ENCODE measurements at regions of chr3 and their contacts with region 1.

Region 1: DNA sequence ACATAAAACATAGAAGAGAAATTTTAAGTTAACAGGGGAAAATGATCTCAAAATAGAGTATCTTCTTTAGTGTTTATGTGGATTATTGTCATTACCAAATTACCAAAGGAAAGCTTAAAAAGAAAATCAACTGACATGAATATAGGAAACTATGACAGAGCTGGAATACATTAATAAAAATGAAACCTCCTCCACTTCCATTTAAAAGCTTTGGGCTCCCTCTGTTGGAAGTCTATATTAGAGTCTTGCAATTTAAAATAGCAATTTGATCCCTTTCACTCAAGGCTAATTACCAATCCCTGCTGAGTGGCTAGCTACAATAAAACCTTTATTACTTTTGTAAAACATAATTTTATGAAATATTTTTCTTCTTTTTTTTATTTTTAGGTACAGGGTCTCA is 61.4 kb upstream of the IMPG2 start:
- DNase-seq: peak; percentile 76
- ATAC-seq: peak; percentile 79
- H3K4me3 ChIP-seq: no peak overlapping the region
- H3K27ac ChIP-seq: no peak overlapping the region
- H3K4me1 ChIP-seq: no peaks in the 10 kb centered on the region
- H3K27me3 ChIP-seq: no peaks in the 10 kb centered on the region
- CTCF ChIP-seq: peak; percentile 82

Region 2: GRCh38 chr3:100603469-100603868 is 778.3 kb before region 1 on chr3:
- CTCF ChIA-PET with region 1: no interaction called
- POLR2A ChIA-PET with region 1: no interaction called
- intact Hi-C with region 1: loop called (anchors 5 kb)
- DNase-seq: peak; percentile 80
- ATAC-seq: peak; percentile 88
- H3K4me3 ChIP-seq: no peak overlapping the region
- H3K27ac ChIP-seq: no peak overlapping the region
- H3K4me1 ChIP-seq: peaks cover 17% of the 10 kb centered on the region
- H3K27me3 ChIP-seq: no peaks in the 10 kb centered on the region
- CTCF ChIP-seq: peak; percentile 81

Region 3: GRCh38 chr3:100737334-100737733 is 644.5 kb before region 1 on chr3:
- CTCF ChIA-PET with region 1: no interaction called
- POLR2A ChIA-PET with region 1: no interaction called
- intact Hi-C with region 1: loop called (anchors 5 kb)
- DNase-seq: peak; percentile 51
- ATAC-seq: peak; percentile 80
- H3K4me3 ChIP-seq: no peak overlapping the region
- H3K27ac ChIP-seq: no peak overlapping the region
- H3K4me1 ChIP-seq: no peaks in the 10 kb centered on the region
- H3K27me3 ChIP-seq: no peaks in the 10 kb centered on the region
- CTCF ChIP-seq: peak; percentile 79

Region 4: DNA sequence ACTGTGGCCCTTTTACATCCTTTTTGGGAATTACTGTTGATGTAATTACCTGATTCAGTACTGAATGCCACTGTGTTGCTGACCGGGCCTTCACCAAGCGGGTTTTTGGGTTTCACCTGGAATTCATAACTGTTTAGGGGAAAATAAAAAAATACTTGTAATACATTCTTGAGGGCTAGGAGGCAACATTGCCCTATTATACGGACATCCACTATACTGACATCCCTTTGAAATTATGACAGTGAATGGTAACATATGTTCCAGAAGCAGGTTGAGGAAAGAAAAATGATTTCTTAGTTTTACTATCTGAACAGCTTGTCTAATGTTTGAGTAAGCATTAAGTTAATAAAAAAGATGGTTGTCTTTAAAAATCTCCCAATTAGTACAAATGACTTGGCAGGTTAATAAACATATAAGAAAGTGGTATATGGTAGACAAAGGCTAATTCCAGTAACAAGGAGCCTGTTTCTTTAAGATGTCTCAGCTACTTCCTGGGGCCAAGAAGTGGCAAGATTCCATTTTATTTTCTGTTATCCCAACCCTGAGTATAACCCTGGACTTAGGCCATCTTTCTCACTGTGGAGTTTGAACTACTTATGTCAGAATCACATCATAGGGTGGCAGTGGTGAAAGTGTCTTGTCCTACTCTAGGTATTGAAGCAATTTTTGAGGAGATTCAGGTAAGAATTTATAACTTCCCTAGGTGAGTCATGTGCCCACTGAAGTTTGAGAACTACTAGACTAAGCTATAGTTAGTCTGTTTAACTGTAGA is 627.1 kb before region 1 on chr3:
- CTCF ChIA-PET with region 1: interaction called, 4 read pairs
- POLR2A ChIA-PET with region 1: no interaction called
- intact Hi-C with region 1: loop called (anchors 5 kb)
- DNase-seq: no peak
- ATAC-seq: peak; percentile 15; the same call in 1 of the 2 replicates
- H3K4me3 ChIP-seq: no peak overlapping the region
- H3K27ac ChIP-seq: no peak overlapping the region
- H3K4me1 ChIP-seq: no peaks in the 10 kb centered on the region
- H3K27me3 ChIP-seq: no peaks in the 10 kb centered on the region
- CTCF ChIP-seq: peak; percentile 40; the same call in 1 of the 2 replicates

Region 5: GRCh38 chr3:100899440-100900091 is 482.2 kb before region 1 on chr3:
- CTCF ChIA-PET with region 1: no interaction called
- POLR2A ChIA-PET with region 1: no interaction called
- intact Hi-C with region 1: loop called (anchors 5 kb)
- DNase-seq: peak; percentile 89
- ATAC-seq: peak; percentile 66
- H3K4me3 ChIP-seq: peak overlapping the region; percentile 32
- H3K27ac ChIP-seq: peak overlapping the region; percentile 92
- H3K4me1 ChIP-seq: peaks cover 64% of the 10 kb centered on the region
- H3K27me3 ChIP-seq: no peaks in the 10 kb centered on the region
- CTCF ChIP-seq: no peak

Region 6: GRCh38 chr3:101229681-101230080 is 152.1 kb before region 1 on chr3:
- CTCF ChIA-PET with region 1: interaction called, 5 read pairs
- POLR2A ChIA-PET with region 1: no interaction called
- intact Hi-C with region 1: loop called (anchors 1 kb)
- DNase-seq: peak; percentile 50
- ATAC-seq: peak; percentile 83
- H3K4me3 ChIP-seq: no peak overlapping the region
- H3K27ac ChIP-seq: no peak overlapping the region
- H3K4me1 ChIP-seq: no peaks in the 10 kb centered on the region
- H3K27me3 ChIP-seq: no peaks in the 10 kb centered on the region
- CTCF ChIP-seq: peak; percentile 59

Region 7: GRCh38 chr3:101311676-101312075 is 70.1 kb before region 1 on chr3:
- CTCF ChIA-PET with region 1: no interaction called
- POLR2A ChIA-PET with region 1: no interaction called
- intact Hi-C with region 1: loop called (anchors 5 kb)
- DNase-seq: no peak
- ATAC-seq: no peak
- H3K4me3 ChIP-seq: no peak overlapping the region
- H3K27ac ChIP-seq: no peak overlapping the region
- H3K4me1 ChIP-seq: peaks cover 14% of the 10 kb centered on the region
- H3K27me3 ChIP-seq: no peaks in the 10 kb centered on the region
- CTCF ChIP-seq: no peak

Region 8: GRCh38 chr3:101433653-101434052 is 51.8 kb after region 1 on chr3:
- CTCF ChIA-PET with region 1: no interaction called
- POLR2A ChIA-PET with region 1: no interaction called
- intact Hi-C with region 1: no loop called
- DNase-seq: no peak
- ATAC-seq: no peak
- H3K4me3 ChIP-seq: no peak overlapping the region
- H3K27ac ChIP-seq: no peak overlapping the region
- H3K4me1 ChIP-seq: no peaks in the 10 kb centered on the region
- H3K27me3 ChIP-seq: no peaks in the 10 kb centered on the region
- CTCF ChIP-seq: no peak

Region 9: GRCh38 chr3:102229062-102229655 is 847.4 kb after region 1 on chr3:
- CTCF ChIA-PET with region 1: no interaction called
- POLR2A ChIA-PET with region 1: no interaction called
- intact Hi-C with region 1: no loop called
- DNase-seq: peak; percentile 94
- ATAC-seq: peak; percentile 31
- H3K4me3 ChIP-seq: no peak overlapping the region
- H3K27ac ChIP-seq: no peak overlapping the region
- H3K4me1 ChIP-seq: peaks cover 39% of the 10 kb centered on the region
- H3K27me3 ChIP-seq: no peaks in the 10 kb centered on the region
- CTCF ChIP-seq: peak; percentile 96

Measured in PC-3 (cell line).